Activated T-helper 1 cell treated with anti-CD3 and anti-CD28 coated beads, Interleukin-12 subunit alpha, Interleukin-12 subunit beta, Interleukin-2, Interleukin-4 antibody, amounts not matched to agents 30 ng/mL and 10 ng/mL and 1 ng/mL, durations not matched to agents 14 hours and 24 hours and 36 hours (primary cell): ENCODE measurements at regions of chr3 and their contacts with region 1.

Region 1: DNA sequence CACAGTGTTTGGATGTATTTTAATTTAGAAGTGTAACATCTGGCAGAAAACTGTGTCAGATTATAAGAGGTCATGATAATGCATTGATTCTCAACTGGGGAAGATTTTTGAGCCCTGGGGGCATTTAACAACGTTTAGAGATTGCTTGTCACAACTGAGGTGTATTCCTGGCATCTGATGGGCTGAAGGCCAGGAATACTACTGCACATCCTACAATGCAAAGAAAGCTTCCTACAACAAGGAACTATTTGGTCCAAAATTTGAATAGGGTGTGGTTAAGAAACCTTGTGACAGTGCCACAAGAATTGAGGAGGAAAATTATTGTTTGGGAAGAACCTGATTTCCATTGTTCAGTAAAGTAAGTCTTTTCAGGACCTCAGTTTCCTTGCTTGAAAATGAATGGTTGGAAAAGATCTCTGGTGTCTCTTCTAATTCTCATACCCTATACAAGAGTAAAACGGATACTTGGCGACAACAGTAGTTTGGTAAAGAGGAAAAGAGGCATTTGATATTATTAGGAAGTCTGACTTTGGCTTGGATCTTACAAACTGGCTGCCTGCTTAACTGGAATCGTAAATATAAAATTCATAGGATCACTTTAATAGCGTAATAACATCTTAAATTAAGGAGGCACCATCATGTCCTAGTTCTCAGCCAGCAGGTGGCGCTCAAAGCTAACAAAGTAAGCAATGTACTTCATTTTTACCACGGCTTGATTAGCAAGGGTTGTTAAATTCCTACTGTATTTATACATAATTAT is 4.3 kb downstream of the DAZL start:
- DNase-seq: peak; percentile 44
- H3K4me3 Mint-ChIP-seq: no peak overlapping the region
- H3K27ac Mint-ChIP-seq: no peak overlapping the region
- H3K4me1 Mint-ChIP-seq: peaks cover 29% of the 10 kb centered on the region
- H3K27me3 Mint-ChIP-seq: peaks cover 24% of the 10 kb centered on the region

Region 2: DNA sequence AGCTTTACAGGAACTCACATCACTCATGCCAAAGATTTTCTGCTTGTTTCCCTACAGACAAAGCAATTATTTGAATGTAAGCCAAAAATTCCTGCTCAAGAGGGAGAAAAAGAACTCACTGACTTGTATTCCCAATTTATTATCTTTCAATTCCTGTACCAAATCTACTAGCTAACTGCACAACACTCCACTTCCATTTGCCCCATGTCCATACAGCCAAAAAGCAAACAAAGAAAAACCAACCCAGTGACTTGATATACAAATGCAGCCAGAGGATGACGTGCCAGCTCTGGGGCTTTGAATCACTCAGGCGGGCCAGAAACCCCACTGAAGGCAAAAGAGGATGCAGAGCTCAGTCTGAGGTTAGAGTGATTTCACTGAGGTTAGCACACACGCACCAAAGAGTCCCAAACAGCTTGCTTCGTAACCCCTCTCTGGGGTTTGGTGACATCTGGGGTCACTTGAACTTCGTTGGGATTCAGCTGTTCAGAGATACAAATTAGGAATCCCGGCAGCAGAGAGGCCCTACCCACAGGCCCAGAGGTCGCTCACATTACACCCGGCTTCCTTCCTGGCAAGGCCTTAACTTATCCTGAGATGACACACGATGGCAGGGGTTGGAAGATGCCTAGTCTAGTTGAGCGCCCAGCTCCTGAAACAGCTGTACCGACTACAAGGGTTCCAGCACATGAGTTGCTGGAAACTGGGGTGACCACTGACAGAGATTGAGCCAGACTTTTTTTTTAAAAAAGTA is 89.1 kb before region 1 on chr3:
- intact Hi-C with region 1: loop called (anchors 2 kb)
- DNase-seq: peak; percentile 79
- H3K4me3 Mint-ChIP-seq: peak overlapping the region; percentile 97
- H3K27ac Mint-ChIP-seq: peak overlapping the region; percentile 89
- H3K4me1 Mint-ChIP-seq: peaks cover 83% of the 10 kb centered on the region
- H3K27me3 Mint-ChIP-seq: no peaks in the 10 kb centered on the region

Region 3: GRCh38 chr3:16743276-16743675 is 142.3 kb after region 1 on chr3:
- intact Hi-C with region 1: no loop called
- DNase-seq: no peak
- H3K4me3 Mint-ChIP-seq: no peak overlapping the region
- H3K27ac Mint-ChIP-seq: no peak overlapping the region
- H3K4me1 Mint-ChIP-seq: no peaks in the 10 kb centered on the region
- H3K27me3 Mint-ChIP-seq: peaks cover 4% of the 10 kb centered on the region

Region 4: DNA sequence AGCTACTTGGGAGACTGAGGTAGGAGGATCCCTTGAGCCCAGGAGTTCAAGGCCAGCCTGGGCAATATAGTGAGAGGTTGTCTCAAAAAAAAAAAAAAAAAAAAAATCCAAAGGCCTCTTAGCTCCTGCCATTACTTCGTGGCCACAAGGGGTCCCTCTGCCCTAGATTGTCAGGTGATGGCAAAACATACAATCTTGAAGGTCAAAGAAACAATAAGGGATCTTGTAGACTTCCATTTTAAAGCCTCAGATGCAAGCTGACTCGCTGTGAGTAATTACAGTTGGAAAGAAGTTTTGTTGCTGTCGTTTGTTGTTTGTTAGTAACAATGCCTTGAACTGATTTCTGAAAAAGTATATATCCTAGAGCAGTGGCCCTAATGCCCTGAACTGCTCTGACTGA is 227.9 kb after region 1 on chr3:
- intact Hi-C with region 1: loop called (anchors 1 kb)
- DNase-seq: peak; percentile 22
- H3K4me3 Mint-ChIP-seq: no peak overlapping the region
- H3K27ac Mint-ChIP-seq: no peak overlapping the region
- H3K4me1 Mint-ChIP-seq: peaks cover 21% of the 10 kb centered on the region
- H3K27me3 Mint-ChIP-seq: peaks cover 17% of the 10 kb centered on the region

Region 5: DNA sequence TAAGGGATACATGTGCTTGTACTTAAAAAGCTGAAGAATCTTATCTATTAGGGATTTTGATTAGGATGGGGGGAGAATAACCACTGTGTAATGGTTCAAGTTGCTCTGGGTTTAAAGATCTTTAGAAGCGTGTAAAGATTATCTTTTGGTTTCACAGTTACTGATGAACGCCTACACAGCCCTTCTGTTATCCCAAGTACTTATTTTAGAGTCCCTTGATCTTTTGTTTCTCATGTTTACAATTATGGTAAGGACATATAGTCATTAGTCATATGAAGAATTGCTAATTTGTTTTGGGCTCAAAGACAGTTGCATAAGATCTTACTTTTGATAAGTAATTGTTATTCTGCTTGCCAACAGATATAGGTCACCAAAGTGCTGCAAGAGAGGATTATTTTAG is 443.9 kb after region 1 on chr3:
- intact Hi-C with region 1: loop called (anchors 2 kb)
- DNase-seq: no peak
- H3K4me3 Mint-ChIP-seq: no peak overlapping the region
- H3K27ac Mint-ChIP-seq: peak overlapping the region; percentile 40
- H3K4me1 Mint-ChIP-seq: peaks cover 57% of the 10 kb centered on the region
- H3K27me3 Mint-ChIP-seq: no peaks in the 10 kb centered on the region

Region 6: DNA sequence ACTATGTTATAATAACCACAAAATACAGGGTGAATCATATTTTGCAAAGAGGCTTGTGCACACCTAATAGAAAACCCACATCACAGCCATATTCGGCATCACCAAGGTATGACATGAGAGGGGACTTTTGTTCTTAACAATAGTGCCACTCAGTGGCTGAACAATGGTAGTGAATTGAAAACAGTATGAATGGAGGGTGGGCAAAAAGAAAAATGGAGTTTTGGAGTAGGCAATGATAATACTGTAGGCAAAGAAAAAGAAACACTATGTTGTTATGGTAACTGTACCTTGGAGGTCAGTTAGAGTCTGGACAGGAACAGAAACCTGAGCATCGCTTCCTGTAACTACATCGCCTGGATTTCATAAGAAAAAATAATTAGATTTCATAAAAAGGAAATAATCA is 632.4 kb after region 1 on chr3:
- intact Hi-C with region 1: loop called (anchors 1 kb)
- DNase-seq: peak; percentile 27
- H3K4me3 Mint-ChIP-seq: no peak overlapping the region
- H3K27ac Mint-ChIP-seq: no peak overlapping the region
- H3K4me1 Mint-ChIP-seq: peaks cover 13% of the 10 kb centered on the region
- H3K27me3 Mint-ChIP-seq: no peaks in the 10 kb centered on the region

Region 7: DNA sequence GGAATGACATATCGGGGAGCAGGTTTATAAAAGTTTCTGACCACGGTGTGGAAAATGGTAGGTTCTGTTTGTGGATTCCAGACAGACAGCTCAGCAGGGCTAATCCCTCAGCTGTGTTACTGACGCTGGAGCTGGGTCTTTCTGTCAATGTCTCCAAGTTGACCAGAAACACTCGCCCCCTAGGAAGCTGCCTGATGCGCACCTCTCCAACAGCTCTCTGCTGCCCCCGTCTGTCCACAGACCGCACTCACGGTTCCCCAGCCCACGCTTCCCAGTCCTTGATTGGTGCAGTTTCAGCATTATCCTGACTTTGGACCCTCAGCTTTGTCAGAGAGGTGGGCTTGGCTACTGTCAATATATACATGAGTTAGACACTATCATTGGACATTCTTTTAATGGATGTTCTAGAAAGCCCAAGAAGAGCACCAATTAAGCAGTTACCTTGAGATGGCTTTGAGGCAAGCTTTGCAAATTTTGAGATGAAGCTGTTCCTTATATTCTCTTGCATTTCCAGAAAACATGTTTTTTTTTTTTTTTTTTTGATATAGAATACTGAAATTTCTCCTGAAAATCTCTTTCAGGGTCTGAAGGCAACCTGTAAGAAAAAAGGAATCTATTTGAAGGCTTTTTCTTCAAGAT is 1240.3 kb after region 1 on chr3:
- intact Hi-C with region 1: loop called (anchors 2 kb)
- DNase-seq: peak; percentile 49
- H3K4me3 Mint-ChIP-seq: no peak overlapping the region
- H3K27ac Mint-ChIP-seq: no peak overlapping the region
- H3K4me1 Mint-ChIP-seq: no peaks in the 10 kb centered on the region
- H3K27me3 Mint-ChIP-seq: peaks cover 4% of the 10 kb centered on the region